B cell (primary cell): ENCODE measurements at regions of chr12 and their contacts with region 1.

Region 1: DNA sequence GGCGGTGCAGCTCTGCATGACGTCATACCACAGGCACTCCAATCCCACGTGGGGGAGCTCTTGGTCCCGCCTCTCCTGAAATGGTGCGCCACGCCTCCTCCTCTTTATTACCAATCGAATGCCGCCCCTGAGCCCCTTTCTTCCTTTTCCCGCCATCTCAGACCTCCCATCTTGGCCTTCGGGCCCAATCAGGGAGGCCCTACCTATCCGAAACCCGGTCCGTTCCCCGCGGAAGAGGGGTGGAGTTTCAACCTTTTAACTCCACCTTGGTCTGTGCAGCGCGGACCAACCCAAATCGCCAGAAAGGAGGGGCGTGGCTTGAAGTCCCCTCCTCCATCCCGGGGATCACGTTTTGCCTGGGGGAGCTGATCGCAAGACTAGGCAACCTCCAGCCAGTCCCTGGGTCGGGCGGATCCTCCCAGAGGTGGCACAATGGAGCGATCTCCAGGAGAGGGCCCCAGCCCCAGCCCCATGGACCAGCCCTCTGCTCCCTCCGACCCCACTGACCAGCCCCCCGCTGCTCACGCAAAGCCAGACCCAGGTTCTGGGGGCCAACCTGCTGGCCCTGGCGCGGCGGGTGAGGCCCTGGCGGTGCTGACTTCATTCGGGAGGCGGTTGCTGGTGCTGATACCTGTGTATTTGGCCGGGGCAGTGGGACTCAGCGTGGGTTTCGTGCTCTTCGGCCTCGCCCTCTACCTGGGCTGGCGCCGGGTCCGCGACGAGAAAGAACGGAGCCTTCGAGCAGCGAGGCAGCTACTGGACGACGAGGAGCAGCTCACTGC is at the start of gene ESYT1:
- DNase-seq: peak; percentile 99
- ATAC-seq: peak; percentile 85
- H3K4me3 ChIP-seq: peak within 1 kb of the TSS; percentile 88 to 95 (median 92)
- H3K4me3 Mint-ChIP-seq: peak within 1 kb of the TSS; percentile 100
- H3K27ac ChIP-seq: peak within 1 kb of the TSS; percentile 76 to 80
- H3K27ac Mint-ChIP-seq: peak within 1 kb of the TSS; percentile 98
- H3K4me1 ChIP-seq: peaks cover 46 to 54% of the 10 kb centered on the region in 2 donors
- H3K4me1 Mint-ChIP-seq: peaks cover 68% of the 10 kb centered on the region
- H3K27me3 ChIP-seq: no peaks in the 10 kb centered on the region
- H3K27me3 Mint-ChIP-seq: no peaks in the 10 kb centered on the region
- CTCF ChIP-seq: no peak
- total RNA-seq, gene ESYT1: 151 and 154 TPM in 2 replicates

Region 2: GRCh38 chr12:55996715-55997534 is 131.2 kb before region 1 on chr12 and contains the start of gene SUOX:
- CTCF ChIA-PET with region 1: no interaction called
- POLR2A ChIA-PET with region 1: no interaction called
- intact Hi-C with region 1: loop called (anchors 5 kb)
- DNase-seq: peak; percentile 46
- ATAC-seq: peak; percentile 74
- H3K4me3 ChIP-seq: peak within 1 kb of the TSS; percentile 32 to 48 (median 41)
- H3K4me3 Mint-ChIP-seq: peak within 1 kb of the TSS; percentile 84
- H3K27ac ChIP-seq: no peak within 1 kb of the TSS
- H3K27ac Mint-ChIP-seq: peak within 1 kb of the TSS; percentile 71
- H3K4me1 ChIP-seq: peaks cover 13 to 18% of the 10 kb centered on the region in 2 donors
- H3K4me1 Mint-ChIP-seq: peaks cover 21% of the 10 kb centered on the region
- H3K27me3 ChIP-seq: peaks cover 0 to 4% (median 0%) of the 10 kb centered on the region in 4 experiments
- H3K27me3 Mint-ChIP-seq: no peaks in the 10 kb centered on the region
- CTCF ChIP-seq: no peak
- total RNA-seq, gene SUOX: 6.3 and 7.5 TPM in 2 replicates

Region 3: GRCh38 chr12:56152318-56153033 is 24.4 kb after region 1 on chr12 and contains the start of gene MYL6B:
- CTCF ChIA-PET with region 1: interaction called, 11 read pairs
- POLR2A ChIA-PET with region 1: interaction called, 44 read pairs
- intact Hi-C with region 1: loop called (anchors 1 kb)
- DNase-seq: peak; percentile 91
- ATAC-seq: peak; percentile 91
- H3K4me3 ChIP-seq: peak within 1 kb of the TSS; percentile 54 to 89 (median 81)
- H3K4me3 Mint-ChIP-seq: peak within 1 kb of the TSS; percentile 94
- H3K27ac ChIP-seq: peak within 1 kb of the TSS; percentile 74 to 88
- H3K27ac Mint-ChIP-seq: peak within 1 kb of the TSS; percentile 98
- H3K4me1 ChIP-seq: peaks cover 15 to 29% of the 10 kb centered on the region in 2 donors
- H3K4me1 Mint-ChIP-seq: peaks cover 36% of the 10 kb centered on the region
- H3K27me3 ChIP-seq: no peaks in the 10 kb centered on the region
- H3K27me3 Mint-ChIP-seq: no peaks in the 10 kb centered on the region
- CTCF ChIP-seq: no peak
- total RNA-seq, gene MYL6B: 23.7 and 25.7 TPM in 2 replicates

Region 4: GRCh38 chr12:56224102-56224701 is 96.1 kb after region 1 on chr12 and contains the start of gene NABP2:
- CTCF ChIA-PET with region 1: interaction called, 15 read pairs
- POLR2A ChIA-PET with region 1: interaction called, 10 read pairs
- intact Hi-C with region 1: loop called (anchors 2 kb)
- DNase-seq: peak; percentile 94
- ATAC-seq: peak; percentile 72
- H3K4me3 ChIP-seq: peak within 1 kb of the TSS; percentile 41 to 71 (median 62)
- H3K4me3 Mint-ChIP-seq: peak within 1 kb of the TSS; percentile 100
- H3K27ac ChIP-seq: peak within 1 kb of the TSS; percentile 53 to 79
- H3K27ac Mint-ChIP-seq: peak within 1 kb of the TSS; percentile 87
- H3K4me1 ChIP-seq: peaks cover 26 to 48% of the 10 kb centered on the region in 2 donors
- H3K4me1 Mint-ChIP-seq: peaks cover 47% of the 10 kb centered on the region
- H3K27me3 ChIP-seq: no peaks in the 10 kb centered on the region
- H3K27me3 Mint-ChIP-seq: no peaks in the 10 kb centered on the region
- CTCF ChIP-seq: peak; percentile 93
- total RNA-seq, gene NABP2: 12.4 and 14.9 TPM in 2 replicates

Region 5: DNA sequence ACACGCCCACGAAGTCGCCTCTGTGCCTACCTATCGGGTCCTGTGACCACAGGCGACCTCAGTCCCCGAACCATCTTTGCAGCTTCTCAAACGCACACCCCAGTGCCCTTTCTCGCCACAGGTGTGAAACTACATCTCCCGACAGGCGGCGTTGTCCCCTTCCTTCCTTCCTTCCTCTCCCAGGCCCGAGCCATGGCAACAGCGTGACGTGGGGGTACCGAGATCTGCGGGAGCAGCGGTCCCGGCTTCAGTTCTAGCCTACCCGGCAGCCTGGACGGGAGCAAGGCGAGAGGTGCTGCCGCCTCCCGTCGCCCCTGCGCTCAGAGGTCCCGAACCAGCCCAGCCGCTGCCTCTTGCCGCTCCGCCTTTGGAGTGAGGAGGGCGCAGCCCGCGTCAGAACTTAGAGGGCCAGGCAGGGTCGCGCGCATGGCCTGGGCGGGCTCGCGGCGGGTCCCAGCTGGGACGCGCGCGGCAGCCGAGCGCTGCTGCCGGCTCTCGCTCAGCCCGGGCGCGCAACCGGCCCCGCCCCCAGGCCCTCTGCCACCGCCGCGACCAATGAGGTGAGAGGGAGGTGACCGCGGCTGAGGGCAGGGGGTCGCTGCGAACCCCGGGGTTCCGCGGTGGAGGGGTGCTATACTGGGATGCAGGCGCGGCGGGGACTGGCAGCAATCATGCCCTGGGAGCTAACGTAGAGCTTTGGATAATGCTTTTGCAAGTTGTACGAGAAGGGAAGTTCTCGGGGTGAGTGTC is 138.8 kb after region 1 on chr12 and contains the start of gene COQ10A:
- CTCF ChIA-PET with region 1: interaction called, 3 read pairs
- POLR2A ChIA-PET with region 1: no interaction called
- intact Hi-C with region 1: loop called (anchors 2 kb)
- DNase-seq: peak; percentile 94
- ATAC-seq: peak; percentile 89
- H3K4me3 ChIP-seq: peak within 1 kb of the TSS; percentile 65 to 86 (median 75)
- H3K4me3 Mint-ChIP-seq: peak within 1 kb of the TSS; percentile 91
- H3K27ac ChIP-seq: peak within 1 kb of the TSS; percentile 94
- H3K27ac Mint-ChIP-seq: peak within 1 kb of the TSS; percentile 95
- H3K4me1 ChIP-seq: peaks cover 10 to 15% of the 10 kb centered on the region in 2 donors
- H3K4me1 Mint-ChIP-seq: peaks cover 20% of the 10 kb centered on the region
- H3K27me3 ChIP-seq: no peaks in the 10 kb centered on the region
- H3K27me3 Mint-ChIP-seq: no peaks in the 10 kb centered on the region
- CTCF ChIP-seq: peak; percentile 72
- total RNA-seq, gene COQ10A: 73.5 and 76.3 TPM in 2 replicates